ENCODE measurements at regions of chr1 and their contacts with region 1.

Region 1: GRCh38 chr1:200302192-200302920 is 107.5 kb downstream of the ZNF281 start:
- DNase-seq: no peak
- H3K4me3 ChIP-seq: peak overlapping the region; percentile 65
- CTCF ChIP-seq: no peak

Region 2: GRCh38 chr1:200180821-200181220 is 121.5 kb before region 1 on chr1:
- CTCF ChIA-PET with region 1: no interaction called
- POLR2A ChIA-PET with region 1: no interaction called
- DNase-seq: no peak
- H3K4me3 ChIP-seq: no peak overlapping the region
- CTCF ChIP-seq: no peak

Region 3: GRCh38 chr1:200314085-200314750 is 11.9 kb after region 1 on chr1:
- CTCF ChIA-PET with region 1: interaction called, 13 read pairs
- POLR2A ChIA-PET with region 1: interaction called, 3 read pairs
- DNase-seq: peak; percentile 93
- H3K4me3 ChIP-seq: no peak overlapping the region
- CTCF ChIP-seq: no peak

Region 4: DNA sequence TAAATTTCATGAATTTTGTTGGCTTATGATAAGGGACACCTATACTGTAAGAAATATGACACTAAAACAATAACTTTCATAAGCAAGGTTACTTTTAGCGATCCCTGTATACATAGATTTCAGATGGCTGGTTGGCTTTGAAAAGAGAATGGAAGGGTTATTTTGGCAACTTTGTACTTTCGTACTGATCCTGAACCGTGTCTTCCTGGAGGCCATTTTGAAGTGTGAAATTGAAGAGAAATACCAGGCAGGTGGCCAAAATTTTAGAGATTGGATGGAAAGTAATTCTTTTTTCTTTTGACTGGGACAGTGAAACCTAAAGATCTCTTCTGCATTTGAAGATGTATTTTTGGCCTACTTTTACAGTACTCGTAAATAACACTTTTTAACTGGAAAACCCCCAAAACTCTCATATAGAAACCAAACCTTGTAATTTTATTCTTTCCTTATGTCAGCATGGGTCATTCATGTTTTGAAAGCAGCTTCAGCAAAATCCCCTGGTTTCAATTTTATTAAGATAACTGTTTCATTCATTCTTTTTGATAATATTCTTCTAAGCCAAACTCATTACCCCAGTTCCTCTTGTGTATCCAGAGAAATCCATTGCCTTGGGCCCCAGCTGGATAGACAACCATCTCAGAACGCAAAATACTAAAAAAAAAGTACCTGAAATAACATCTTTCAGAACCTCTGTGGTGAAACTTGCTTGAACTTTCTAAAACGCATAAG is 145.8 kb after region 1 on chr1:
- CTCF ChIA-PET with region 1: no interaction called
- POLR2A ChIA-PET with region 1: no interaction called
- DNase-seq: no peak
- H3K4me3 ChIP-seq: no peak overlapping the region
- CTCF ChIP-seq: no peak

Region 5: GRCh38 chr1:200488375-200489165 is 186.2 kb after region 1 on chr1:
- CTCF ChIA-PET with region 1: interaction called, 10 read pairs
- POLR2A ChIA-PET with region 1: interaction called, 3 read pairs
- DNase-seq: peak; percentile 51
- H3K4me3 ChIP-seq: no peak overlapping the region
- CTCF ChIP-seq: peak; percentile 68

Measured in AG04449 (cell line).